Tibial artery (tissue), 4 donors: ENCODE measurements at regions of chr18 and their contacts with region 1.

Region 1: GRCh38 chr18:22547807-22548561 is 130.3 kb upstream of the CTAGE1 start:
- DNase-seq: no peak
- H3K4me3 ChIP-seq: no peak overlapping the region
- H3K27ac ChIP-seq: peak overlapping the region in 1 of 2 donors; percentile 68
- H3K4me1 ChIP-seq: peaks cover 0 to 69% (median 40%) of the 10 kb centered on the region in 4 donors
- H3K27me3 ChIP-seq: no peaks in the 10 kb centered on the region
- CTCF ChIP-seq: no peak

Region 2: DNA sequence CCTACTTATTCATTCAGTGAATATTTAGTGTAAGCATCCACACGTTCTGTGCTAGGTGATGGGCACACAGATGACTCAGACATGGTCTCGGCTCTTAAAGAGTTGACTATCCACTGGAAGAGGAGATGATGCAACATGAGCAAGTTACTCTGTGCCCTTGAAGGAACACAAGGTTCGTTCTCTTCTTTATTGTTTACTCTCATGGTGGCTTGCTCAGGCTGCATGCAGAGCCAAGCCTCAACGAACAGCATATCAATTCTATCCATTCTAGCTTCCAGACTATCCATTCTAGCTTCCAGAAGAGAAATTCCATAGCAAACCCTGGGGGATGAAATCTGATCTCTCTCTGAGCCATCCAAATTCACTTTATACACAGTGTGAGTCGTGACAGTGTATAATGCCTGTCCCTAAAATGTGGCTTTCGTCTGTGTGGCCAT is 62.2 kb before region 1 on chr18:
- intact Hi-C with region 1: loop called (anchors 5 kb)
- DNase-seq: no peak
- H3K4me3 ChIP-seq: no peak overlapping the region
- H3K27ac ChIP-seq: peak overlapping the region in 1 of 2 donors; percentile 74
- H3K4me1 ChIP-seq: peaks cover 0 to 21% (median 18%) of the 10 kb centered on the region in 4 donors
- H3K27me3 ChIP-seq: no peaks in the 10 kb centered on the region
- CTCF ChIP-seq: no peak